ENCODE measurements at regions of chr12 and their contacts with region 1.

Region 1: GRCh38 chr12:56117778-56118687 is at the start of gene ZC3H10:
- DNase-seq: peak; percentile 85 to 99 (median 97)
- ATAC-seq: peak; percentile 74 to 82
- H3K4me3 Mint-ChIP-seq: peak within 1 kb of the TSS; percentile 95 to 99 (median 98)
- H3K27ac Mint-ChIP-seq: peak within 1 kb of the TSS; percentile 92 to 100 (median 98)
- H3K4me1 Mint-ChIP-seq: peaks cover 27 to 46% (median 38%) of the 10 kb centered on the region in 4 donors
- H3K27me3 Mint-ChIP-seq: no peaks in the 10 kb centered on the region
- polyA plus RNA-seq, gene ZC3H10: 1.3 to 2.5 (median 1.8) TPM

Region 2: DNA sequence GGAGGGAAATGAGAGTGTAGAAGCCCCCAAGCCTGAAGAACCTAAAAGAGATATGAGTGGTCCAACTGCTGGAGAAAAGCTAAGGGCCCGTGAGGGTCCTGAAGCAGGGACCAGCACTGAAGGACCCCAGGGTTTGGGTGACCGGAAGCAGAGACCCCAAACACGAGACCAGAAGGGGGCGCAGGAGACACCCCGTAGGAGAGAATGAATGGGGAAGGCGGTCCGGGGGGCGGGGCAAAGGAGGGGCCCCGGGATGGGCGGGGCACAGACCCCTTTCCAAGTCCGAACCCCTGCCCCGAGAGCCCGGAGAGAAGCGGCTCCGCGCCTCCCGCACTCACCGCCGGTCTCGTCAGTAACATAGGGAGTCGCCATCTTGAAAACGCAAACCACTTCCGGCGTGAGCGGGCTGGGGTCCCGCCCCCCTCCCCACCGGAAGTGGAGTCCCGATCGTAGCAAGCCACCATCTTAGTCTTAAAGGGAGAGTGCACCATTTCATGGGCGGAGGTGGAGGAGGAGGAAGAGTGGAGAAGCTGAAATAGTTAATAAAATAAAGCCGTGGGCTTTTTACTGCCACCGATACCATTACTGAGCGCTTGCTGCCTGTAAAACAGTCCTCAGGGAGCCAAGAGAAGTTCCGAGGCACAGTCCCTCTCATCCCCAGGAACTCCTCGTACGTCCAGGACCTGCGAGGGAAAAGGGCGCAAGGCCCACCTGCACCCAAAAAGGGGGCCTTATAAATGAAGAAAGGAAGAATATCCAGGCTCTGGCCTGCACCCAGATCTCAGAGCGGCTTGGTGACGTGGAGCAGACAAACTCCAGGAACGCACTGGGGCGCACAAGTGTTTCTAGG is 191.1 kb before region 1 on chr12:
- POLR2A ChIA-PET with region 1: interaction called, 13 read pairs
- DNase-seq: peak; percentile 77 to 96 (median 88)
- ATAC-seq: peak; percentile 41 to 46
- H3K4me3 Mint-ChIP-seq: peak overlapping the region; percentile 92 to 100 (median 98)
- H3K27ac Mint-ChIP-seq: peak overlapping the region; percentile 95 to 100 (median 98)
- H3K4me1 Mint-ChIP-seq: peaks cover 34 to 67% (median 51%) of the 10 kb centered on the region in 4 donors
- H3K27me3 Mint-ChIP-seq: no peaks in the 10 kb centered on the region

Region 3: GRCh38 chr12:56041552-56042429 is 76.2 kb before region 1 on chr12 and contains the start of gene RPS26:
- POLR2A ChIA-PET with region 1: interaction called, 54 read pairs
- DNase-seq: peak; percentile 81 to 98 (median 90)
- ATAC-seq: peak; percentile 89
- H3K4me3 Mint-ChIP-seq: peak within 1 kb of the TSS; percentile 90 to 100 (median 99)
- H3K27ac Mint-ChIP-seq: peak within 1 kb of the TSS; percentile 95 to 100 (median 99)
- H3K4me1 Mint-ChIP-seq: peaks cover 13 to 37% (median 32%) of the 10 kb centered on the region in 4 donors
- H3K27me3 Mint-ChIP-seq: no peaks in the 10 kb centered on the region
- polyA plus RNA-seq, gene RPS26: 743 to 1,060 (median 810) TPM

Region 4: DNA sequence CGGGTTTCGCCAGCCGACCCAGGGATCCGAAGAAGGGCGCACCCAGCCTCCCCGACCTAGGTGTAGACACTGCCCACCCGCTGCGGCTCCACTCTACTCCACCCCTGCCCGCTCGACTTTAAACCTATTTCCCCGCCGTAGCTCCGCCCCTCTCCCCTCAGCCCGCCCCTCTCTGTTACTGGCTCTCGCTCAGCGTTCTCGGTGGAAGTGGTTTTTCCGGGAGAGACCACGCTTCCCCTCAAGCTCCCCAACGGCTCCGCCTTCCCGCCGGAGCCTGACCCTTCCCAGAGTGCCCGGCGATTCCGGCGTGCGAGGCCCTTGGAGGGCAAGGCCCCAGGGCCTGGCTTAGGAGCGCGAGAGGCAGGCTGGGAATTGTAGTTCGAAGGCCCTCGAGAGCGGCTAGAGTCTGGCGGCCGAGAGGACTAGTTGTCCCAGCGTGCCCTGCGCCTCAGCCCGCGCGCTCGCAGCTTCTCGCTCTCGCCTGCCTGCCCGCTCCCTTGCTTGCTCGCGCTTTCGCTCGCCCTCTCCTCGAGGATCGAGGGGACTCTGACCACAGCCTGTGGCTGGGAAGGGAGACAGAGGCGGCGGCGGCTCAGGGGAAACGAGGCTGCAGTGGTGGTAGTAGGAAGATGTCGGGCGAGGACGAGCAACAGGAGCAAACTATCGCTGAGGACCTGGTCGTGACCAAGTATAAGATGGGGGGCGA is 13.8 kb before region 1 on chr12 and contains the start of gene PA2G4:
- POLR2A ChIA-PET with region 1: interaction called, 236 read pairs
- DNase-seq: peak; percentile 82 to 99 (median 94)
- ATAC-seq: peak; percentile 88
- H3K4me3 Mint-ChIP-seq: peak within 1 kb of the TSS; percentile 93 to 100 (median 98)
- H3K27ac Mint-ChIP-seq: peak within 1 kb of the TSS; percentile 97 to 99 (median 98)
- H3K4me1 Mint-ChIP-seq: peaks cover 35 to 73% (median 62%) of the 10 kb centered on the region in 4 donors
- H3K27me3 Mint-ChIP-seq: no peaks in the 10 kb centered on the region
- polyA plus RNA-seq, gene PA2G4: 219 to 241 (median 241) TPM

Region 5: GRCh38 chr12:56137853-56138571 is 20.0 kb after region 1 on chr12:
- POLR2A ChIA-PET with region 1: interaction called, 22 read pairs
- DNase-seq: peak in 3 of 10 donors; percentile 31 to 41 (median 41)
- ATAC-seq: peak; percentile 49 to 56
- H3K4me3 Mint-ChIP-seq: peak overlapping the region in 9 of 10 donors; percentile 49 to 82 (median 71)
- H3K27ac Mint-ChIP-seq: peak overlapping the region; percentile 85 to 94 (median 92)
- H3K4me1 Mint-ChIP-seq: peaks cover 33 to 80% (median 70%) of the 10 kb centered on the region in 4 donors
- H3K27me3 Mint-ChIP-seq: no peaks in the 10 kb centered on the region

Region 6: DNA sequence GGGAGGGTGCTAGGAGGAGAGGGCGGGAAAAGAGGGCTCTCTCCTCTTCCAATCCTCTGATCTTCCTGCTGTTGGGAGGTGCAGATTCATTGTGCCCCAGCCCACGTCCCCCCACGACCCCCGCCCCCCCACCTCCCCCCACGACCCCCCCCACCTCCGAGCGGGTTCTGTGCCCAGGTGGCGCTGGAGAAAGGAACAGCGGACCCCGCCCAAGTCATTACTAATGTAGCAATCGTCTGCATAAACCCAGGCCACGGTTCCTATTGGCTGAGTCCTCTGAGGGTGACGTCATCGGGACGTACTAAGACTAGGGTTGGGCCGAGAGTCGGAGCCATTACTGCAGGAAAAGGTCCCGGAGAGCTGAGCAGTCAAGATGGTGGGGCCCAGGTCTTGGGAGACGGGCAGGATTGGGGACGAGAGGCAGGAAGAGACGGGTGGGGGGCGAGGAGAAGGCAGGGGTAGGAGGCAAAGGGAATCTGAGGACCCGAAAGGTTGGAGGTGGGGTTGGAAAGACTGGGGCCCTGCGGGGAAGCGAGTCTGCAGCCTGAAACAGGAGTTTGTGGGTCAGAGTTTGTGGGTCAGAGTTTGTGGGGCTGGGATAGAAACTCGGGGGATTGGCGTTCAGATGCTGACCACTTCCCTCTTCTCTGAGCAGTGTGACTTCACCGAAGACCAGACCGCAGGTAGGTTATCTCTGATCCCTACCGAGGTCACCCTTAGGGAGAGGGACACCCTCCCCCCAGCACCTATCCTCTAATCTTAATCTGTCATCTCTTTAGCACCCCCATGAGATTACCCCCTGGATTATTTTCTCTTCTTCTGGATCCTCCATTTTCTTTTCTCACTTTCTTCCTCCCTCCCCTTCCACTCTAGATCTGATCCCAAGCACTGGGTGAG is 40.2 kb after region 1 on chr12 and contains the start of gene MYL6:
- POLR2A ChIA-PET with region 1: interaction called, 163 read pairs
- DNase-seq: peak; percentile 72 to 97 (median 90)
- ATAC-seq: peak; percentile 85 to 87
- H3K4me3 Mint-ChIP-seq: peak within 1 kb of the TSS; percentile 93 to 99 (median 98)
- H3K27ac Mint-ChIP-seq: peak within 1 kb of the TSS; percentile 95 to 100 (median 98)
- H3K4me1 Mint-ChIP-seq: peaks cover 32 to 54% (median 49%) of the 10 kb centered on the region in 4 donors
- H3K27me3 Mint-ChIP-seq: no peaks in the 10 kb centered on the region
- polyA plus RNA-seq, gene MYL6: 1,813 to 2,533 (median 2,044) TPM

Region 7: DNA sequence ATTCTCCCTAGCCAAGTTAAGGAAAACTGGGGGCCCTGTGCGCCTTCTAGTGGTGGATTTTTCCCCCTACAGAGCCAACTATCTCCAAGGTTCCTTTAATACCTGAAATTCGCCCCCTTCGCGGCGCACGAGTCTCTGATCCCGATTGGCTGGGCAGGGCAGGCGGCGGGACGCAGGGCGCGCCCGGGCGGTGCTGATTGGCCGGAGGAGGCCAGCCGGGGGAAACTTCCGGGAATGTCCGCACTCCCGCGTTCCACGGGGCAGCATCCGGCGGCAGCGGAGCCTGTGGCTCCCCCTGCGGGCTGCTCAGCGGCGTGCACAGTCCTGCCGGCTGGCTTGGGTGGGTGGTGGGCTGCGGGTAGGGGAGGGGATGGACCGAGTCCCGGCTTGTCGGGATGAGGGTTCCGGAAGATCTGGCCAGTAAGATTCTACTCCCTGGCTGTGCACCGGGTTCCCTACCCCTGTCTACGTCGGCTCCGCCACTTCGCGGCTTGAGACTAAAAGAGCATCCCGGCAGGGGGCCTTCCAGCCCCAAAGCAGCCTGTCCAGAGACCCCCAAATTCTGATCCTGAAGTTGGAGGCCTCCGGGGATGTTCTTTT is 106.2 kb after region 1 on chr12 and contains the start of gene NABP2:
- POLR2A ChIA-PET with region 1: interaction called, 62 read pairs
- DNase-seq: peak; percentile 77 to 94 (median 86)
- ATAC-seq: peak; percentile 75 to 79
- H3K4me3 Mint-ChIP-seq: peak within 1 kb of the TSS; percentile 83 to 100 (median 97)
- H3K27ac Mint-ChIP-seq: peak within 1 kb of the TSS; percentile 71 to 100 (median 98)
- H3K4me1 Mint-ChIP-seq: peaks cover 27 to 53% (median 47%) of the 10 kb centered on the region in 4 donors
- H3K27me3 Mint-ChIP-seq: no peaks in the 10 kb centered on the region
- polyA plus RNA-seq, gene NABP2: 3.5 to 3.9 (median 3.7) TPM

Measured in naive thymus-derived CD8-positive, alpha-beta T cell (primary cell).